ENCODE measurements at regions of chr6 and their contacts with region 1.

Region 1: GRCh38 chr6:4135665-4136353 is 434 bp upstream of the ECI2 start:
- DNase-seq: peak; percentile 89 to 97 (median 95)
- ATAC-seq: peak; percentile 91
- H3K4me3 ChIP-seq: peak overlapping the region; percentile 75 to 77
- H3K4me3 Mint-ChIP-seq: peak overlapping the region; percentile 80
- H3K27ac ChIP-seq: peak overlapping the region; percentile 44 to 57
- H3K27ac Mint-ChIP-seq: peak overlapping the region; percentile 73
- H3K4me1 ChIP-seq: peaks cover 27% of the 10 kb centered on the region
- H3K4me1 Mint-ChIP-seq: peaks cover 47% of the 10 kb centered on the region
- H3K27me3 ChIP-seq: no peaks in the 10 kb centered on the region
- H3K27me3 Mint-ChIP-seq: no peaks in the 10 kb centered on the region
- CTCF ChIP-seq: no peak

Region 2: GRCh38 chr6:3068329-3069214 is 1067.2 kb before region 1 on chr6 and contains the start of gene RIPK1:
- CTCF ChIA-PET with region 1: no interaction called
- POLR2A ChIA-PET with region 1: no interaction called
- intact Hi-C with region 1: loop called in 1 of 2 experiments (anchors 2 kb)
- DNase-seq: peak; percentile 85 to 98 (median 93)
- ATAC-seq: peak; percentile 74
- H3K4me3 ChIP-seq: peak within 1 kb of the TSS; percentile 67 to 95
- H3K4me3 Mint-ChIP-seq: peak within 1 kb of the TSS; percentile 98
- H3K27ac ChIP-seq: peak within 1 kb of the TSS; percentile 93 to 96
- H3K27ac Mint-ChIP-seq: peak within 1 kb of the TSS; percentile 99
- H3K4me1 ChIP-seq: peaks cover 39% of the 10 kb centered on the region
- H3K4me1 Mint-ChIP-seq: peaks cover 62% of the 10 kb centered on the region
- H3K27me3 ChIP-seq: no peaks in the 10 kb centered on the region
- H3K27me3 Mint-ChIP-seq: no peaks in the 10 kb centered on the region
- CTCF ChIP-seq: peak; percentile 33
- total RNA-seq, gene RIPK1: 18.6 to 19.7 TPM

Region 3: DNA sequence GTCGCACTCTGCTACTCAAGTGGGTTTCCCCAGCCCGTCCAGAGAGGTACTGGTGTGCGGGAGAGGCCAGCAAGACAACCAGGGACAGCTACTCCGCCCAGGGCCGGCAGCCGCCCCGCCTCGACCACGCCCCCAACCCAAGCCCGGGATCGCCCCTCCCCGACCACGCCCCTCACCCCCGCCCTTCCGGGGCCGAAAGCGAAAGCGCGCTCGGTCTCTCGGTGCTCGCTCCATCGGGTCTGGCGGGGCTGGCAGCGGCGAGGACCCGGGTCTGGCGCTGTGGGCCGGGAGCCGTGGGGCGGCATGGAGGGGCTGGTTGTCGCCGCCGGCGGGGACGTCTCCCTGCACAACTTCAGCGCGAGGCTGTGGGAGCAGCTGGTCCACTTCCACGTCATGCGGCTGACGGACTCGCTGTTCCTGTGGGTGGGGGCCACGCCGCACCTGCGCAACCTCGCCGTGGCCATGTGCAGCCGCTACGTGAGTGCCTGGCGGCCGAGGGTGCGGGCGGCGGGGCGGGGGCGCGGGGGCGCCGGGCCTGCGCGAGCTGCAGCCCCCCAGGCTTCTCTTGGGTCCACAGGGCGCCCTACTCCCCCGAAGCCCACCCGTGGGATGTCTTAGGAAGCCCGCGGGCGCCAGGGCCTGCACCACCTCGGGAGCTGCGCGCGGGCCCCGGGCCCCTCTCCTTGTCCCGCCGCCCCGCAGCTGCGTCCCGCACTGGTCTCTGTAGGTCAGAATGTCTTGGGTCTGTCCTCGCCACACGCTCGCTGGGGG is 876.9 kb before region 1 on chr6 and contains the start of gene PSMG4:
- CTCF ChIA-PET with region 1: no interaction called
- POLR2A ChIA-PET with region 1: no interaction called
- intact Hi-C with region 1: loop called (anchors 2 kb)
- DNase-seq: peak; percentile 85 to 96 (median 93)
- ATAC-seq: peak; percentile 82
- H3K4me3 ChIP-seq: peak within 1 kb of the TSS; percentile 81 to 82
- H3K4me3 Mint-ChIP-seq: peak within 1 kb of the TSS; percentile 95
- H3K27ac ChIP-seq: peak within 1 kb of the TSS; percentile 54 to 76
- H3K27ac Mint-ChIP-seq: peak within 1 kb of the TSS; percentile 94
- H3K4me1 ChIP-seq: peaks cover 37% of the 10 kb centered on the region
- H3K4me1 Mint-ChIP-seq: peaks cover 42% of the 10 kb centered on the region
- H3K27me3 ChIP-seq: no peaks in the 10 kb centered on the region
- H3K27me3 Mint-ChIP-seq: no peaks in the 10 kb centered on the region
- CTCF ChIP-seq: no peak
- total RNA-seq, gene PSMG4: 11.8 to 12.0 TPM

Region 4: DNA sequence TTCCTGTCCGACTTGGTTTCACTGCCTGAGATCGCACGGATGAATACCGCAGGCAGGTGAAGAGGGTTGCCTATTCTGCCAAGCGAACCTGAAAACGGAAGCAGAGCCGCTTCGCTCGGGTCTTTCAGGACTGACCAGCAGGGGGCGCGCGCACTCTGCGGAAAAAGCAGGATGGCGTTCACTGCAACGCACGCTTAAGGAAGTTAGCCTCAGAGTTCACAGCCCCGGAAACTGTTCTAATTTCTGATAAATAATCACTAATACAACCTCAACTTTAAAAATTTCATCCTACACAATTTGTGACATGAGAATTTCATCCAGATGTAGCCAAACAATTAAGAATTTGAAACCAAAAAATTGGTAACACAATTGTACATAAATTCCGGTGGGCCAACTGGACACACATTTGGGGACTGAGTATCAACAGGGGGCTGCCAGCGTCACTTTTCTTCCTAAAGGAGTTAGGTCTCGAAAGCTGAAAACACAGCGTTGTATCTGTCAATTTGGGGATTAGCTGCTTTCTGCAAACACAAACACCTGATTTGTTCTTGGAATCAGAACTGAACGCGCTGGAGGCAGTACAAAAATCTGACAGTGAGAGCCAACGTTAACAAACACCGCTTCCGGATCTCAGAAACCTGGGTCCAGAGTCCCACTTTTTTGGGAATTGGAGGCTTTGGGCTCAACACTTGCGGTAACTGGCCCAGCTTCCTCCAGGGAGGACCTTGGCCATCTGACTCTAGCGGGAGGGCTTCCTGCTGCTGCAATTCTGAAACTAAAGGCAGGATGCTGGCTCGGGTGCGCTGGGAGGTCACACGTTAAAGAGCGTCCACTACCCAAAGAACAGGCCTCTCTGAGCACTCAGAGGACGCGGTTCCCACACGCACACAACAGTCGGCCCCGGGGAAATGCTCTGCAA is 393.1 kb before region 1 on chr6:
- CTCF ChIA-PET with region 1: interaction called, 3 read pairs
- POLR2A ChIA-PET with region 1: no interaction called
- intact Hi-C with region 1: loop called in 1 of 2 experiments (anchors 5 kb)
- DNase-seq: peak; percentile 79 to 97 (median 87)
- ATAC-seq: peak; percentile 91
- H3K4me3 ChIP-seq: peak overlapping the region in 1 of 2 experiments; percentile 22
- H3K4me3 Mint-ChIP-seq: peak overlapping the region; percentile 47
- H3K27ac ChIP-seq: no peak overlapping the region
- H3K27ac Mint-ChIP-seq: no peak overlapping the region
- H3K4me1 ChIP-seq: peaks cover 9% of the 10 kb centered on the region
- H3K4me1 Mint-ChIP-seq: peaks cover 6% of the 10 kb centered on the region
- H3K27me3 ChIP-seq: peaks cover 0 to 2% of the 10 kb centered on the region in 2 experiments
- H3K27me3 Mint-ChIP-seq: peaks cover 11% of the 10 kb centered on the region
- CTCF ChIP-seq: peak; percentile 88

Region 5: GRCh38 chr6:4055420-4056041 is 80.3 kb before region 1 on chr6:
- CTCF ChIA-PET with region 1: no interaction called
- POLR2A ChIA-PET with region 1: interaction called, 4 read pairs
- intact Hi-C with region 1: loop called (anchors 1 to 2 kb)
- DNase-seq: peak in 3 of 9 experiments; percentile 24 to 28 (median 26)
- ATAC-seq: no peak
- H3K4me3 ChIP-seq: no peak overlapping the region
- H3K4me3 Mint-ChIP-seq: no peak overlapping the region
- H3K27ac ChIP-seq: no peak overlapping the region
- H3K27ac Mint-ChIP-seq: peak overlapping the region; percentile 2
- H3K4me1 ChIP-seq: peaks cover 13% of the 10 kb centered on the region
- H3K4me1 Mint-ChIP-seq: peaks cover 19% of the 10 kb centered on the region
- H3K27me3 ChIP-seq: no peaks in the 10 kb centered on the region
- H3K27me3 Mint-ChIP-seq: no peaks in the 10 kb centered on the region
- CTCF ChIP-seq: no peak

Region 6: GRCh38 chr6:5003604-5004372 is 868.0 kb after region 1 on chr6 and contains the start of gene RPP40:
- CTCF ChIA-PET with region 1: no interaction called
- POLR2A ChIA-PET with region 1: no interaction called
- intact Hi-C with region 1: loop called (anchors 2 to 5 kb)
- DNase-seq: peak; percentile 97 to 99 (median 98)
- ATAC-seq: peak; percentile 94
- H3K4me3 ChIP-seq: peak within 1 kb of the TSS; percentile 80 to 95
- H3K4me3 Mint-ChIP-seq: peak within 1 kb of the TSS; percentile 94
- H3K27ac ChIP-seq: peak within 1 kb of the TSS; percentile 79 to 82
- H3K27ac Mint-ChIP-seq: peak within 1 kb of the TSS; percentile 97
- H3K4me1 ChIP-seq: peaks cover 8% of the 10 kb centered on the region
- H3K4me1 Mint-ChIP-seq: peaks cover 13% of the 10 kb centered on the region
- H3K27me3 ChIP-seq: no peaks in the 10 kb centered on the region
- H3K27me3 Mint-ChIP-seq: no peaks in the 10 kb centered on the region
- CTCF ChIP-seq: peak; percentile 84
- total RNA-seq, gene RPP40: 0.94 to 1.2 TPM

Measured in CD8-positive, alpha-beta T cell (primary cell).